ENCODE measurements at regions of chr2 and their contacts with region 1.

Region 1: DNA sequence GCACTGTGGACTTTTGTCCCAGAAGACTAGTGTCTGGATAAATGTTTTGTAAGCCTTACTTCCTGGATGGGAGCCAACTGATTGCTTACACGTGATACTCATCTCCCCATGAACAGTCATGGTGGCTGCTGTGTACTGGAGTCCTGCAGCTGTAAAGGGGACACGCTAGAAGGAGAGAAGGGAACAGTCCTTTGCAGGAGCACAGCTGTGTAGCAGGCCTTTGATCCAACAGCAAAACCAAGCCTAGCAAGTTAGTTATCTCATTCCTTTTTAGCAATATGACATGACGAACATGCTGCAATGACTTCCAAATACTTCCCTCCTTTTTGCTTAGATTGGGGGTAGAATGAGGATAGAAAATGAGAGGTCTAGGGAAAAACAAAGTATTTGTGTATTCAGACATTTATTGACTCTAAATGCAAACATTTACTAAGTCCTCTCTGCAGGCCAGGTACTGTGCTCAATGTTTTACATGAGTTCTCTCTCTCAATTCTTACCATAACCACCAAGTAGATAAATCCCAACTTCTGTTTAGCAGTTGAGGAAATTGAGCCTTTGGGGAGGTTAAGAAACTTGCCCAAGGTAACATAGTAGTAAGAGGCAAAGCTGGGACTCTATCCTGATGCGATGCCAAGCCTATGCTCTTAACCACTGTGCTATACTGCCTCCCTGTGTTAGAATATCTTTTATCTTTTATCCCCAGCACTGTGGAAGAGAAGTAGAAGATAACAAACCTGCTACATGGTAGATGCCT is 55.4 kb upstream of the CD28 start:
- DNase-seq: peak; percentile 67
- H3K4me3 ChIP-seq: no peak overlapping the region
- H3K27ac ChIP-seq: peak overlapping the region; percentile 12
- H3K4me1 ChIP-seq: peaks cover 20% of the 10 kb centered on the region
- H3K27me3 ChIP-seq: no peaks in the 10 kb centered on the region
- CTCF ChIP-seq: peak; percentile 56

Region 2: GRCh38 chr2:203225423-203226039 is 425.5 kb before region 1 on chr2:
- CTCF ChIA-PET with region 1: interaction called, 3 read pairs
- POLR2A ChIA-PET with region 1: no interaction called
- intact Hi-C with region 1: loop called (anchors 10 kb)
- DNase-seq: peak; percentile 37
- H3K4me3 ChIP-seq: no peak overlapping the region
- H3K27ac ChIP-seq: no peak overlapping the region
- H3K4me1 ChIP-seq: no peaks in the 10 kb centered on the region
- H3K27me3 ChIP-seq: no peaks in the 10 kb centered on the region
- CTCF ChIP-seq: peak; percentile 70

Region 3: DNA sequence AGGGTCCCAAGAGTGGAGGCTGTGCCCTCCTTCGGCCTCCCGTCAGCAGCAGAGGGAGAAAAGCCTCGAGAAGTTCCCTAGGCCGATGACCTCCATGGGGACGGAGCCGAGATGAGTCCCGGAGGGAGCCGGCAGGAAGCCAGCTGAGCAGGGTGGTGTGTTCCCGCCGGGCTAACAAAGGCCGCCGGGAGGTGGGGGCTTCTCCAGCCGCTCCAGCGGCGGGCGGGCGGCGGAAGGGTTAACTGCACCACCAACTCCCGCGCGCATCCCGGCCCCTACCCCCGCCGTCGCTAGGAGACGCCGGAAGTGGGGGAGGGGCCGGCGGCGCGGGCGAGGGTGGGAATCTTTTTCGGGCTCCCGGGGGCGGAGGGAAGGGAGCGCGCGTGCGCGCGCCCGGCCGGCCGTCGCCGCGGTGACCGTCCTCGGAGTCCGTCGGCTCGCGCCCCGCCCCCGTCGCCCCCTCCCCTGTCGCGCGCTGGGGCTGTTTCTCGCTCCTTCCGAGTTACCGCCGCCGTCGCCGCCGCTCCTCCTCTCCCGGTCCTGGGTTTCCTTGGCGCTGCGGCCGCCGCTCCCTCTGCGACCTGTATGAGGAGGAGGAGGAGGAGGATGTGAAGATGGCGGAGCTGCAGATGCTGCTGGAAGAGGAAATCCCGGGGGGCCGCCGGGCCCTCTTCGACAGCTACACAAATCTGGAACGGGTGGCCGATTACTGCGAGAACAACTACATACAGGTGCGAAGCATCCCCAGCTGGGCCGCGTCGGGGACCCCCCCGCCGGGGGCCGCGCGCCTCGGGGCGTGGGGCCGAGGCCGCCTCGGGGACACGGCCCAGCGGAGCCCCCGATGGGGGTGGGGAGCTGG is 322.9 kb before region 1 on chr2 and contains the start of gene ABI2:
- CTCF ChIA-PET with region 1: no interaction called
- POLR2A ChIA-PET with region 1: no interaction called
- intact Hi-C with region 1: loop called (anchors 5 kb)
- DNase-seq: peak; percentile 97
- H3K4me3 ChIP-seq: peak within 1 kb of the TSS; percentile 92
- H3K27ac ChIP-seq: peak within 1 kb of the TSS; percentile 90
- H3K4me1 ChIP-seq: peaks cover 9% of the 10 kb centered on the region
- H3K27me3 ChIP-seq: no peaks in the 10 kb centered on the region
- CTCF ChIP-seq: no peak
- total RNA-seq, gene ABI2: 134 and 146 TPM in 2 replicates

Region 4: GRCh38 chr2:203484266-203485112 is 166.5 kb before region 1 on chr2:
- CTCF ChIA-PET with region 1: no interaction called
- POLR2A ChIA-PET with region 1: no interaction called
- intact Hi-C with region 1: loop called (anchors 5 kb)
- DNase-seq: peak; percentile 40
- H3K4me3 ChIP-seq: no peak overlapping the region
- H3K27ac ChIP-seq: no peak overlapping the region
- H3K4me1 ChIP-seq: no peaks in the 10 kb centered on the region
- H3K27me3 ChIP-seq: no peaks in the 10 kb centered on the region
- CTCF ChIP-seq: peak; percentile 49

Region 5: DNA sequence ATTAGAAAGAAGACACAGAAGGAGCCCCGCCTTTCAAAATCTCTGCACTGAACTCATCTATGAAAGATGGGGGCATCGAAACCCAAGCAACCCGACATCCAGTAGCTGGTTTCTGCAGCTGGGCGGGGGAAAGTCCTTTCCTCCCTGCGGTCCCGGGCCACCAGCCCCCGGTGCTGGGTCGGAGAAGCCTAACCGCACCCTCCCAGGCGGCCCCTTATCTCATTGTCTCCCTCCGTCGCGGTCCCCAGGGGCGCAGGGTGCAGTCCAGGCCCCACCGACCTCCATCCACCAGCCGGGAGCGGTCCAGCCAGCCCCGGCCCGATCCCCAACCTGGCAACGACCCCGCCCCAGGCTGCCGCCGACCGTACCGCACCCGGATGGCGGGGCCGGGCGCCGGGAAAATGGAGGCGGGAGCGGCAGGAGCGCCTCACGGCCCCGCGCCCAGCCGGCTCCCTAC is 116.4 kb before region 1 on chr2:
- CTCF ChIA-PET with region 1: no interaction called
- POLR2A ChIA-PET with region 1: no interaction called
- intact Hi-C with region 1: loop called (anchors 5 kb)
- DNase-seq: peak; percentile 51
- H3K4me3 ChIP-seq: peak overlapping the region; percentile 92
- H3K27ac ChIP-seq: peak overlapping the region; percentile 84
- H3K4me1 ChIP-seq: peaks cover 7% of the 10 kb centered on the region
- H3K27me3 ChIP-seq: no peaks in the 10 kb centered on the region
- CTCF ChIP-seq: no peak

Region 6: GRCh38 chr2:203893401-203893800 is 242.4 kb after region 1 on chr2:
- CTCF ChIA-PET with region 1: no interaction called
- POLR2A ChIA-PET with region 1: no interaction called
- intact Hi-C with region 1: no loop called
- DNase-seq: no peak
- H3K4me3 ChIP-seq: no peak overlapping the region
- H3K27ac ChIP-seq: no peak overlapping the region
- H3K4me1 ChIP-seq: no peaks in the 10 kb centered on the region
- H3K27me3 ChIP-seq: no peaks in the 10 kb centered on the region
- CTCF ChIP-seq: no peak

Region 7: GRCh38 chr2:204039298-204039838 is 388.3 kb after region 1 on chr2:
- CTCF ChIA-PET with region 1: no interaction called
- POLR2A ChIA-PET with region 1: no interaction called
- intact Hi-C with region 1: no loop called
- DNase-seq: no peak
- H3K4me3 ChIP-seq: no peak overlapping the region
- H3K27ac ChIP-seq: no peak overlapping the region
- H3K4me1 ChIP-seq: no peaks in the 10 kb centered on the region
- H3K27me3 ChIP-seq: no peaks in the 10 kb centered on the region
- CTCF ChIP-seq: no peak

Region 8: DNA sequence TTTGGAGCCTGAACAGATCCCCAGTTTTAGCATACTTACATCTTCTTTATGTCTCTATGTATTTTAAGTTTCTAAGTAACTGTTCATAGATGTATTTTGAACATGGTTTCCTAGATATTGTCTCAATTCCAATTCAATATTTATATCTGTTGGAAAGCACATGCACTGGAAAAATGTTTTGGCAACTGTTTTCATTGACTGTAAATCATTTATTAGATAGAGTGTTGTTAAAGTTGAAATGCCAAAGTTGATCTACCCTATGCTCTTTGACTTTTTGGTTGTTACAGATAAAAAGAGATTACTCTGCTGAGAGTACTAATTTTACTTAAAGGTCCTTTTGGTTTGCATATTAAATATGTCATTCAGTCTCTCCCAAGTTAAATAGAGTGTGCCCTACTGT is 1686.2 kb after region 1 on chr2:
- CTCF ChIA-PET with region 1: no interaction called
- POLR2A ChIA-PET with region 1: no interaction called
- intact Hi-C with region 1: no loop called
- DNase-seq: no peak
- H3K4me3 ChIP-seq: no peak overlapping the region
- H3K27ac ChIP-seq: no peak overlapping the region
- H3K4me1 ChIP-seq: no peaks in the 10 kb centered on the region
- H3K27me3 ChIP-seq: no peaks in the 10 kb centered on the region
- CTCF ChIP-seq: no peak